Ovary (tissue), 10 donors: ENCODE measurements at regions of chr19 and their contacts with region 1.

Region 1: GRCh38 chr19:47210689-47211316 is 20.2 kb downstream of the BBC3 start:
- DNase-seq: peak; percentile 69 to 89 (median 73)
- H3K4me3 ChIP-seq: no peak overlapping the region
- H3K27ac ChIP-seq: no peak overlapping the region
- H3K4me1 ChIP-seq: peaks cover 1% of the 10 kb centered on the region
- H3K27me3 ChIP-seq: no peaks in the 10 kb centered on the region
- CTCF ChIP-seq: peak; percentile 41 to 85 (median 84)
- EP300 ChIP-seq: no peak
- POLR2A ChIP-seq: no peak

Region 2: GRCh38 chr19:47066376-47067214 is 144.2 kb before region 1 on chr19:
- intact Hi-C with region 1: no loop called
- DNase-seq: no peak
- H3K4me3 ChIP-seq: no peak overlapping the region
- H3K27ac ChIP-seq: no peak overlapping the region
- H3K4me1 ChIP-seq: no peaks in the 10 kb centered on the region
- H3K27me3 ChIP-seq: no peaks in the 10 kb centered on the region
- CTCF ChIP-seq: no peak
- EP300 ChIP-seq: no peak
- POLR2A ChIP-seq: no peak

Region 3: GRCh38 chr19:47143322-47144073 is 67.3 kb before region 1 on chr19:
- intact Hi-C with region 1: loop called in 1 of 4 experiments (anchors 10 kb)
- DNase-seq: no peak
- H3K4me3 ChIP-seq: no peak overlapping the region
- H3K27ac ChIP-seq: no peak overlapping the region
- H3K4me1 ChIP-seq: no peaks in the 10 kb centered on the region
- H3K27me3 ChIP-seq: no peaks in the 10 kb centered on the region
- CTCF ChIP-seq: no peak
- EP300 ChIP-seq: no peak
- POLR2A ChIP-seq: no peak